Dorsolateral prefrontal cortex (tissue), 120 donors: ENCODE measurements at regions of chr11 and their contacts with region 1.

Region 1: GRCh38 chr11:71433648-71434450 is 14.3 kb downstream of the DHCR7 start:
- DNase-seq: peak in 4 of 10 donors; percentile 40 to 56 (median 48)
- H3K4me3 ChIP-seq: peak overlapping the region in 3 of 59 donors; percentile 1 to 21 (median 5)
- H3K27ac ChIP-seq: peak overlapping the region; percentile 74 to 99 (median 94)
- H3K27me3 ChIP-seq: no peaks in the 10 kb centered on the region
- CTCF ChIP-seq: no peak

Region 2: DNA sequence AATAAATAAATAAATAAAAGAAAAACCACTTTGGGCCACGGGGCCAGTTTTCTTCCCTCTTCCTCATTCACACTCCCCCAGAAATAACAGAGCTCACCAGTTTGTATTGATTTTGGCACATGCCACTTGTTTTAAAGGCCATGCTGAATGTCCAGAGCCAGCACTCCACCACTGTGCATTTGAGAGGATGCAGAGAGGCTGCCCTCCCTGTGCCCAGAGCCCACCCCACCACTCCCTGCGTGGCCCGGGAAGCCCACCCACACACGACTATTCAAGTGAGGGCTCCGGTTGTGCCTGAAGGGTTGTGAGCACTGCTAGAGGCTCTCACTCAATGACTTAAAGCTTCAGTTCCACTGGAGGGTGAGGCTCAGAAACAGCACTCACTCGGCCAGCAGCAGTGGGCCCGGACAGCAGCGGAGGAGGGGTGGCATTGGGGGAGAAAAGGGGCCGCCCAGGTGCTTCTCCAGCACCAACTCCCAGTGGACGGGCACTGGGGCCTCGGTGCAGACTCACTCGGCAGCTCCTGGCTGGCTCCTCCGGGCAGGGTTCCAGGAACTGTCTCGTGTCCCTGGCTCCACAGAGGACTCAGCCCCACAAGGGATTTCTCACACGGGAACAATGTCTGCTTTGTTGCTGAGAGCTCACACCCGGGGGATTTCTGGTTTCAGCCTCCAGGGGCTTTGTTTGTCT is 294.2 kb before region 1 on chr11:
- intact Hi-C with region 1: loop called in 1 of 2 experiments (anchors 10 kb)
- DNase-seq: peak; percentile 53 to 96 (median 93)
- H3K4me3 ChIP-seq: peak overlapping the region in 5 of 59 donors; percentile 2 to 13 (median 6)
- H3K27ac ChIP-seq: peak overlapping the region in 58 of 59 donors; percentile 46 to 98 (median 92)
- H3K27me3 ChIP-seq: no peaks in the 10 kb centered on the region
- CTCF ChIP-seq: peak in 10 of 56 donors; percentile 5 to 30 (median 22)

Region 3: GRCh38 chr11:71453037-71453898 is 19.4 kb after region 1 on chr11 and contains the start of gene NADSYN1:
- intact Hi-C with region 1: no loop called
- DNase-seq: peak; percentile 95 to 98 (median 96)
- H3K4me3 ChIP-seq: peak within 1 kb of the TSS; percentile 71 to 100 (median 94)
- H3K27ac ChIP-seq: peak within 1 kb of the TSS; percentile 38 to 97 (median 91)
- H3K27me3 ChIP-seq: no peaks in the 10 kb centered on the region
- CTCF ChIP-seq: peak in 17 of 56 donors; percentile 3 to 39 (median 21)
- total RNA-seq, gene NADSYN1: 44.1 to 151 (median 75.1) TPM

Region 4: GRCh38 chr11:71500601-71501021 is 66.8 kb after region 1 on chr11:
- intact Hi-C with region 1: no loop called
- DNase-seq: peak in 1 of 10 donors; percentile 31
- H3K4me3 ChIP-seq: no peak overlapping the region
- H3K27ac ChIP-seq: no peak overlapping the region
- H3K27me3 ChIP-seq: no peaks in the 10 kb centered on the region
- CTCF ChIP-seq: no peak

Region 5: GRCh38 chr11:71563401-71563800 is 129.6 kb after region 1 on chr11:
- intact Hi-C with region 1: loop called in 1 of 2 experiments (anchors 10 kb)
- DNase-seq: peak in 2 of 10 donors; percentile 14 to 41
- H3K4me3 ChIP-seq: no peak overlapping the region
- H3K27ac ChIP-seq: no peak overlapping the region
- H3K27me3 ChIP-seq: peaks cover 0 to 11% (median 0%) of the 10 kb centered on the region in 45 donors
- CTCF ChIP-seq: peak in 42 of 56 donors; percentile 12 to 59 (median 38)